Activated B cell treated with CpG ODN at 0.5 μM for 24 hours (primary cell): ENCODE measurements at regions of chr1 and their contacts with region 1.

Region 1: GRCh38 chr1:87328272-87329050 is at the start of gene LMO4:
- DNase-seq: peak; percentile 85
- ATAC-seq: peak; percentile 78
- H3K4me3 Mint-ChIP-seq: peak within 1 kb of the TSS; percentile 95
- H3K27ac Mint-ChIP-seq: peak within 1 kb of the TSS; percentile 97
- H3K4me1 Mint-ChIP-seq: peaks cover 47% of the 10 kb centered on the region
- H3K27me3 Mint-ChIP-seq: no peaks in the 10 kb centered on the region
- CTCF ChIP-seq: no peak
- total RNA-seq, gene LMO4: 31.2 and 37.1 TPM in 2 replicates

Region 2: DNA sequence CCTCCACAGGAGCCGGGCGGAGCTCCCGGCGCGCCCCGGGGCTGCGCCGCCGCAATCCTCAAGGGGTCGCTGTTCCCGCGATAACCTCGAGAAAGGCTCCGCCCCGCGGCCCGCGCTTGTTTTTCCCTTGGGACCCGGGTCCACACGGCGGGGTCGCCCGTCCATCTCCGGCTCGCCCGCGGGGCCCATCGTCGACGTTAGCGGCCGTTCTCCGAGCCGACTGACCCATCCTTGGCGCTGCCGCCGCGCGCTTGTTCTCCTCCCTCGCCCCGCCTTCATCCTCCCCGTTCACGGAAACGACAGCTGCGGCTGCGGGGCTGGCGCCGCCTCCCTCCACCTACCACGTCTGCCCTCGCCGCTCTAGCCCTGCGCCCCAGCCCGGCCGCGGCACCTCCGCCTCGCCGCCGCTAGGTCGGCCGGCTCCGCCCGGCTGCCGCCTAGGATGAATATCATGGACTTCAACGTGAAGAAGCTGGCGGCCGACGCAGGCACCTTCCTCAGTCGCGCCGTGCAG is 623.9 kb before region 1 on chr1 and contains the start of gene SH3GLB1:
- CTCF ChIA-PET with region 1: interaction called, 4 read pairs
- POLR2A ChIA-PET with region 1: interaction called, 10 read pairs
- intact Hi-C with region 1: loop called (anchors 1 kb)
- DNase-seq: peak; percentile 92
- ATAC-seq: peak; percentile 87
- H3K4me3 Mint-ChIP-seq: peak within 1 kb of the TSS; percentile 99
- H3K27ac Mint-ChIP-seq: peak within 1 kb of the TSS; percentile 99
- H3K4me1 Mint-ChIP-seq: peaks cover 46% of the 10 kb centered on the region
- H3K27me3 Mint-ChIP-seq: no peaks in the 10 kb centered on the region
- CTCF ChIP-seq: peak; percentile 26
- total RNA-seq, gene SH3GLB1: 63.8 and 63.9 TPM in 2 replicates

Region 3: DNA sequence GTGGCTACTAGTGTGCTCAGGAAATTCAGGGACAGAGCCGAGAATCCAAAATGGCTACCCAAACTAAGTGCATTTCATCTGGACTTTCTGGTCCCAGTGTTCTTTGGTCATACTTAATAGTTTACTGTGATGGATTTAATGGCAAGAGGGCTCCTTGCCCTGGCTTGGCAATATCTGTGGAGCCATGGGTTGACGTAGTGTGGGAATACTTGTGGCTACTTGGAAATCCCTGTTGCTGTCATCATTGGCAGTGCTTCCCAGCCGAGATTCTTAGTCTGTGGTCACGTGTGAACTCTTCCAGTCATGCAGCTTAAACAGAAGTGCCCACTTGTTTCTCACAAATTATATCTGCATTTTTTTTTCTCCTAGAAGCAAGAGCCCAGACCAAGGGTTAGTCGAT is 215.1 kb before region 1 on chr1:
- CTCF ChIA-PET with region 1: no interaction called
- POLR2A ChIA-PET with region 1: no interaction called
- intact Hi-C with region 1: no loop called
- DNase-seq: no peak
- ATAC-seq: no peak
- H3K4me3 Mint-ChIP-seq: no peak overlapping the region
- H3K27ac Mint-ChIP-seq: no peak overlapping the region
- H3K4me1 Mint-ChIP-seq: peaks cover 6% of the 10 kb centered on the region
- H3K27me3 Mint-ChIP-seq: no peaks in the 10 kb centered on the region
- CTCF ChIP-seq: no peak

Region 4: DNA sequence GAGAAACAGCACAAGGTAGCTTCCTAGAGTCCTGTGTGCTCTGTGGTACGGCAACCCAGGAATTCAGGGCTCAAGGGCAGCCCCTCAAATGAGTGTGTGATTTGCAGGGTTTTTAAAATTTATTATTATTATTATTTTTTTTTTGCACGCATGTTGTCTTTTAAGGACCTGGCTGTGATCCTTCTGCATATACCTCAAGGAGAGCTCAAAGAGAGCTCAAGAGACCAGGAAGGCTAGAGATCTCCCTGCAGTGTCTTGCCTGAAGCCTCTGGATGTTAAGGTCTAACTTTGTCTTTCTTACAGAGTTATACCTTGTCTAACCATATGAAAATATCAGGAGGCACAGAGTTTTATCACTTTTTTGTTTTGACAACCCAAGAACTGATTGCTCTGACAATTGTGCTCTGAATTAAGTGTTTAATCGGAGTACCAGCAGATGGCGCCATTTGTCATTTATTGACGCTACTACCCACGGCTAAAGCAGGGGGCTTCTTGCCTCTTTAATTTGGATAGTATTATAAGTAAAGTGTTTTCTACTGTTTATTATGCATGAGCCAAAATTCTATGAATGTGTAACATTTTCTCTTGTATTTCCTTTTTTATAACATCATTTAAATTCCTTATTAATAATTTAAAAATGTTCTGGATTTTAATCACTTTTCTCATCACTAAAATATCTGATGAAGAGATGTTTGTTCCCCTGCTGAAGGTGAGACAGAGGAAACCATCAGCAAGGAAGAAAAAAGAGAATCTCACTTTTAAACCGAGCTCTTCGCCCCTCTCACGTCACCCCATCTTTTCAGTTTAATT is 35.6 kb before region 1 on chr1:
- CTCF ChIA-PET with region 1: interaction called, 4 read pairs
- POLR2A ChIA-PET with region 1: interaction called, 7 read pairs
- intact Hi-C with region 1: loop called (anchors 1 kb)
- DNase-seq: no peak
- ATAC-seq: peak; percentile 52
- H3K4me3 Mint-ChIP-seq: no peak overlapping the region
- H3K27ac Mint-ChIP-seq: no peak overlapping the region
- H3K4me1 Mint-ChIP-seq: no peaks in the 10 kb centered on the region
- H3K27me3 Mint-ChIP-seq: peaks cover 2% of the 10 kb centered on the region
- CTCF ChIP-seq: peak; percentile 71

Region 5: GRCh38 chr1:87757676-87758075 is 429.2 kb after region 1 on chr1:
- CTCF ChIA-PET with region 1: no interaction called
- POLR2A ChIA-PET with region 1: interaction called, 4 read pairs
- intact Hi-C with region 1: loop called (anchors 5 kb)
- DNase-seq: no peak
- ATAC-seq: no peak
- H3K4me3 Mint-ChIP-seq: no peak overlapping the region
- H3K27ac Mint-ChIP-seq: no peak overlapping the region
- H3K4me1 Mint-ChIP-seq: peaks cover 17% of the 10 kb centered on the region
- H3K27me3 Mint-ChIP-seq: no peaks in the 10 kb centered on the region
- CTCF ChIP-seq: no peak

Region 6: GRCh38 chr1:87894062-87894461 is 565.6 kb after region 1 on chr1:
- CTCF ChIA-PET with region 1: no interaction called
- POLR2A ChIA-PET with region 1: no interaction called
- intact Hi-C with region 1: loop called (anchors 5 kb)
- DNase-seq: no peak
- ATAC-seq: peak; percentile 74
- H3K4me3 Mint-ChIP-seq: peak overlapping the region; percentile 13
- H3K27ac Mint-ChIP-seq: peak overlapping the region; percentile 30
- H3K4me1 Mint-ChIP-seq: peaks cover 26% of the 10 kb centered on the region
- H3K27me3 Mint-ChIP-seq: no peaks in the 10 kb centered on the region
- CTCF ChIP-seq: no peak

Region 7: GRCh38 chr1:88683541-88684481 is 1355.3 kb after region 1 on chr1 and contains the start of gene PKN2:
- CTCF ChIA-PET with region 1: no interaction called
- POLR2A ChIA-PET with region 1: interaction called, 10 read pairs
- intact Hi-C with region 1: loop called (anchors 1 kb)
- DNase-seq: peak; percentile 94
- ATAC-seq: peak; percentile 91
- H3K4me3 Mint-ChIP-seq: peak within 1 kb of the TSS; percentile 95
- H3K27ac Mint-ChIP-seq: peak within 1 kb of the TSS; percentile 97
- H3K4me1 Mint-ChIP-seq: peaks cover 28% of the 10 kb centered on the region
- H3K27me3 Mint-ChIP-seq: no peaks in the 10 kb centered on the region
- CTCF ChIP-seq: no peak
- total RNA-seq, gene PKN2: 29.4 and 42.7 TPM in 2 replicates